PC-9 (cell line): ENCODE measurements at regions of chr12 and their contacts with region 1.

Region 1: DNA sequence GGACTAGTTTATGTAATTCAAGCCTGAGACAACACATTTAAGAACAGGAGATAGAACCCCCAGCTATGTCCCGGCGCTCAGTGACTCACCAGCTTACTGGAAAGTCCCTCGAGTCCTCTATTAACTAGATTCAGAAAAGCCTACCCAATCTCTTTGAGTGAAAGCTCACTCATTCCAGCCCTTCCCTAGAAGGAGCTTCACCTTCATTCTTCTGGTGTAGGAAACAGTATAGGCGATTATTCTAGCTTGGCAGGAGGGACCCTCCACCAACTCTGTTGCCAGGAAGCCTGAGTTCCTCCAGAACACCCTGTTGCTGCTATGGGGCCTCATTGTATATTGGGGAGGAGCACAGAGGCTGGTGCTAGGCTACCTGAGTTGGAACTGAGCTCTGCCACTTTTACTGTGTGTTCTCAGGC is 57.2 kb upstream of the AEBP2 start:
- DNase-seq: peak; percentile 66 to 76
- H3K4me3 ChIP-seq: no peak overlapping the region
- H3K27ac ChIP-seq: peak overlapping the region; percentile 46
- H3K4me1 ChIP-seq: peaks cover 15% of the 10 kb centered on the region
- H3K27me3 ChIP-seq: no peaks in the 10 kb centered on the region
- CTCF ChIP-seq: no peak

Region 2: DNA sequence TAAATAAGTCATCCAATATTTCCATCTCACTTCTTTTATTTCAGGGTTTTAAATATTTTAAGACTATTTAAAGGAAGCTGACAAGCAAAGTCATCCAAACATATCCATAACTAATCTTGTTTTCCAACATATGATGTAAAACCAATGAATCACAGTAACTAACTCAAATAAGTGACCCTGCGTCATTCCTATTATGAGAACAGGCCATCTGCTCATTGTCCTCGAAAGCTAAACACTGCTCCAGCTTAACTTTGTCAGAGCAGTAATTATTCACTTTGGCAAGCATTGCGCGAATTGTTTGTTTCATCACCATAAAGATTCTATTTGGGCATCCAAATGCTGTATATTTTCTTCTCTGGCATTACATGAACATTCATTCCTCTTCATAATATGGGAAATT is 545.1 kb before region 1 on chr12:
- CTCF ChIA-PET with region 1: no interaction called
- POLR2A ChIA-PET with region 1: no interaction called
- intact Hi-C with region 1: no loop called
- DNase-seq: no peak
- H3K4me3 ChIP-seq: no peak overlapping the region
- H3K27ac ChIP-seq: no peak overlapping the region
- H3K4me1 ChIP-seq: no peaks in the 10 kb centered on the region
- H3K27me3 ChIP-seq: no peaks in the 10 kb centered on the region
- CTCF ChIP-seq: no peak

Region 3: GRCh38 chr12:19439059-19440018 is 57.2 kb after region 1 on chr12 and contains the start of gene AEBP2:
- CTCF ChIA-PET with region 1: no interaction called
- POLR2A ChIA-PET with region 1: no interaction called
- intact Hi-C with region 1: loop called (anchors 5 kb)
- DNase-seq: peak; percentile 67 to 93
- H3K4me3 ChIP-seq: peak within 1 kb of the TSS; percentile 100
- H3K27ac ChIP-seq: peak within 1 kb of the TSS; percentile 54
- H3K4me1 ChIP-seq: peaks cover 16% of the 10 kb centered on the region; the same call in 1 of the 2 replicates
- H3K27me3 ChIP-seq: no peaks in the 10 kb centered on the region
- CTCF ChIP-seq: no peak
- total RNA-seq, gene AEBP2: 37.2 and 50.3 TPM in 2 replicates